Esophagus squamous epithelium (tissue), 5 donors: ENCODE measurements at regions of chr5 and their contacts with region 1.

Region 1: DNA sequence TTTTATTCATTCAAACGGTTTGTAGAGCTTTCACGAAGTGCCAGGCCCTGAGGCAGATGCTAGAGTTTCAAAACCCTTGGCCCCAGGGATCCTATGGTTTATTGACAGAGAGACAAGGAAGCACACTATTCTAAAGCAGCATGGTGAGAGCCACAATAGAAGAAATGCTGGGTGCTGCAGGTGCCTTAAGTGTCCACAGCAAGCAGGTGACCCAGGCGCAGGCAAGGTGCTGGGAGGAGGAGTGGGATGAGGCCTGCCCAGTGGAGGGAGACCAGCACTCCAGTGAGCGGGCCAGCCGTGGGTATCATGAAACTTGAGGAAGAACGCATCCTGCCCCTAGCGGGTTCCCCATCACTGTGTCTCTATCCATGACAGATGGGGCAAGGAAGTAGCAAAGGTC is 71.0 kb downstream of the OSMR start:
- DNase-seq: no peak
- H3K4me3 ChIP-seq: no peak overlapping the region
- H3K27ac ChIP-seq: no peak overlapping the region
- H3K4me1 ChIP-seq: peaks cover 0 to 11% (median 0%) of the 10 kb centered on the region in 3 donors
- H3K27me3 ChIP-seq: no peaks in the 10 kb centered on the region
- CTCF ChIP-seq: no peak
- POLR2A ChIP-seq: no peak

Region 2: DNA sequence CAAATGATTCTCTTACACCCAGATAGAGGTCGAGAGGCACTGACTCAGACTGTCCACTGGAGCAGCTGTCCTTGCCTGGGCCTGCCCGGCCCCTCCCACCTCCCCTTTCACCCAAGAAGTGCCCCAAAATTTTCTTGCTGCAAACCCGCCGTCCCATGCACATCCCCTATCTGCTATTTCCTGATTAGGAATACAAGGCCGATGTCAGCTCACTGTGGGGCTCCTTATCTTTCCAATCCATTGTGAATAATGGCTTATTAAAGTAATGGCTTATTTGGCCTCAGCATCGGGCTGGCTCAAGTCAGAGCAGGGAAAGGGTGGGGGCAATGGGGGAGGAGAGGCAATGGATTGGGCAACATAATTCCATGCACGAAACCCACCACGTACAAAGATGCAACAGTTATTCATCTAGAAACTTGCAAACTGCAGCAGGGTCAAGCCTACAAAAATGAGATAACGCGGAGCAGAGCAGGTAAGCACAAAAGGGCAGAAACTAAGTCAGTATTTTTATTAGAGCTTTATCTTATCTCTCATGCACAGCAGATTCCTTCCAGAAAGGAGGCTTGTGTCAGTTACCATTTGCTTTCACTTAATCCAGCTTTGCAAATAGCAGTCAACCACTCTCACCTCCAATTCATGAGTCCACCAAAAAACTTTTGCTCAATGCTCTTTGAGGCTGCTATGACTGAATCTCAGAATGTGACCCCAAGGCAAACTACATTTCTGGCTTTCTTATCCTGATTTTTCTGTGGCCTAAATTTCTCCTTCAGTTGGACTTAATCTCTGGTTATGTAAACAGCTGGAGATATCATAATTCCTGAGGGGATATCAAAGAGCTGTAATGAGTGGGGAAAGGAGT is 209.2 kb before region 1 on chr5:
- intact Hi-C with region 1: no loop called
- DNase-seq: no peak
- H3K4me3 ChIP-seq: no peak overlapping the region
- H3K27ac ChIP-seq: no peak overlapping the region
- H3K4me1 ChIP-seq: no peaks in the 10 kb centered on the region
- H3K27me3 ChIP-seq: no peaks in the 10 kb centered on the region
- CTCF ChIP-seq: no peak
- POLR2A ChIP-seq: no peak

Region 3: GRCh38 chr5:38776149-38776896 is 140.5 kb before region 1 on chr5:
- intact Hi-C with region 1: no loop called
- DNase-seq: no peak
- H3K4me3 ChIP-seq: no peak overlapping the region
- H3K27ac ChIP-seq: no peak overlapping the region
- H3K4me1 ChIP-seq: peaks cover 0 to 8% (median 0%) of the 10 kb centered on the region in 3 donors
- H3K27me3 ChIP-seq: no peaks in the 10 kb centered on the region
- CTCF ChIP-seq: no peak
- POLR2A ChIP-seq: no peak

Region 4: GRCh38 chr5:38827525-38827924 is 89.3 kb before region 1 on chr5:
- intact Hi-C with region 1: loop called (anchors 10 kb)
- DNase-seq: no peak
- H3K4me3 ChIP-seq: no peak overlapping the region
- H3K27ac ChIP-seq: no peak overlapping the region
- H3K4me1 ChIP-seq: peaks cover 6 to 38% (median 11%) of the 10 kb centered on the region in 3 donors
- H3K27me3 ChIP-seq: no peaks in the 10 kb centered on the region
- CTCF ChIP-seq: no peak
- POLR2A ChIP-seq: no peak

Region 5: DNA sequence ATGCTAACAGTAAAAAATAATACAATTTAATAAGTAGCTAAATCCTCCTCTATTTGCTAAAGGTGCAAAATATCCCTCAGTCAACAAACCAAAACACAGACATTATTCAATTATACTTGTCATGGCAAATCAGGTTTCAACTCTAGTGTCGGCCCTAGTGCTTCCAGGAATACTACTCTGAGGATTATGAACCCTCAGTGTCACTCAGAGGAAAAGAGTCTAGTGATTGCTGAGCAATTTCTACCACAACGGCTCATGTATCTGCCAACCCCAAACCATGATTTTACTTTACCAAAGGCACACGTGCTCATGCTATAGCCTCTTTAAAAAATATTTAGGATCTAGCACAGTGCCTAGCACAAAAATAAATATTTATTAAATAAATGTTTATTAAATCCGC is 136.4 kb after region 1 on chr5:
- intact Hi-C with region 1: no loop called
- DNase-seq: no peak
- H3K4me3 ChIP-seq: no peak overlapping the region
- H3K27ac ChIP-seq: no peak overlapping the region
- H3K4me1 ChIP-seq: peaks cover 0 to 44% (median 0%) of the 10 kb centered on the region in 3 donors
- H3K27me3 ChIP-seq: no peaks in the 10 kb centered on the region
- CTCF ChIP-seq: no peak
- POLR2A ChIP-seq: no peak